ENCODE measurements at regions of chr1 and their contacts with region 1.

Region 1: GRCh38 chr1:165703648-165704047 is 5.3 kb upstream of the ALDH9A1 start:
- DNase-seq: no peak
- ATAC-seq: no peak

Region 2: GRCh38 chr1:165768513-165769394 is 65.1 kb after region 1 on chr1 and contains the start of gene TMCO1:
- intact Hi-C with region 1: loop called in 1 of 2 experiments (anchors 5 kb)
- DNase-seq: peak; percentile 92 to 98
- ATAC-seq: peak; percentile 98
- total RNA-seq, gene TMCO1: 165 to 216 TPM

Measured in left colon (tissue), 2 donors.